CD14-positive monocyte (primary cell): ENCODE measurements at regions of chr1 and their contacts with region 1.

Region 1: GRCh38 chr1:151165738-151166505 is at the starts of genes LYSMD1 and SCNM1:
- DNase-seq: peak; percentile 96 to 99 (median 98)
- H3K4me3 ChIP-seq: peak within 1 kb of the TSS; percentile 71 to 91 (median 81)
- H3K4me3 Mint-ChIP-seq: peak within 1 kb of the TSS; percentile 95 to 97
- H3K27ac ChIP-seq: peak within 1 kb of the TSS; percentile 56 to 83
- H3K27ac Mint-ChIP-seq: peak within 1 kb of the TSS; percentile 89 to 95 (median 93)
- H3K4me1 ChIP-seq: peaks cover 27 to 31% of the 10 kb centered on the region in 2 donors
- H3K4me1 Mint-ChIP-seq: peaks cover 44% of the 10 kb centered on the region
- H3K27me3 ChIP-seq: no peaks in the 10 kb centered on the region
- H3K27me3 Mint-ChIP-seq: peaks cover 0 to 1% (median 0%) of the 10 kb centered on the region in 3 donors
- CTCF ChIP-seq: no peak
- polyA plus RNA-seq, gene LYSMD1: 0.16 to 0.24 TPM in 2 of 3 donors, not detected in the other
- polyA plus RNA-seq, gene SCNM1: 74.9 to 110 (median 103) TPM

Region 2: DNA sequence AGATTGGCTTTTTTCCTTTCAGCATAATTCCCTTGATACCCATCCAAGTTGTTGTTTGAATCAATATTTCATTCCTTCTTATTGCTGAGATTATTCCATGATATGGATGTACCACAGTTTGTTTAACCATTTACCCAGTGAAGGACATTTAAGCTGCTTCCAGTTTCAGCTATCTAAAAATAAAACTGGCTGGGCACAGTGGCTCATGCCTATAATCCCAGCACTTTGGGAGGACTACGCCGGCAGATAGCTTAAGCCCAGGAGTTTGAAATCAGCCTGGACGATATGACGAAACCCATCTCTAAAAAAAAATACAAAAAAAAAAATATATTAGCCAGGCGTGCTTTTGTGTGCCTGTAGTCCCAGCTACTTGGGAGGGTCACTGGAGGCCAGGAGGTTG is 52.0 kb before region 1 on chr1:
- intact Hi-C with region 1: no loop called
- DNase-seq: no peak
- H3K4me3 ChIP-seq: no peak overlapping the region
- H3K4me3 Mint-ChIP-seq: no peak overlapping the region
- H3K27ac ChIP-seq: no peak overlapping the region
- H3K27ac Mint-ChIP-seq: no peak overlapping the region
- H3K4me1 ChIP-seq: no peaks in the 10 kb centered on the region
- H3K4me1 Mint-ChIP-seq: no peaks in the 10 kb centered on the region
- H3K27me3 ChIP-seq: no peaks in the 10 kb centered on the region
- H3K27me3 Mint-ChIP-seq: peaks cover 0 to 2% (median 0%) of the 10 kb centered on the region in 3 donors
- CTCF ChIP-seq: no peak

Region 3: GRCh38 chr1:151198255-151199127 is 32.6 kb after region 1 on chr1 and contains the start of gene PIP5K1A:
- intact Hi-C with region 1: loop called in 1 of 2 experiments (anchors 2 kb)
- DNase-seq: peak; percentile 98 to 100 (median 99)
- H3K4me3 ChIP-seq: peak within 1 kb of the TSS; percentile 54 to 90 (median 67)
- H3K4me3 Mint-ChIP-seq: peak within 1 kb of the TSS; percentile 97 to 99
- H3K27ac ChIP-seq: peak within 1 kb of the TSS; percentile 89 to 90
- H3K27ac Mint-ChIP-seq: peak within 1 kb of the TSS; percentile 98 to 99 (median 99)
- H3K4me1 ChIP-seq: peaks cover 25 to 37% of the 10 kb centered on the region in 2 donors
- H3K4me1 Mint-ChIP-seq: peaks cover 42% of the 10 kb centered on the region
- H3K27me3 ChIP-seq: peaks cover 0 to 2% of the 10 kb centered on the region in 2 donors
- H3K27me3 Mint-ChIP-seq: peaks cover 4 to 8% (median 4%) of the 10 kb centered on the region in 3 donors
- CTCF ChIP-seq: no peak
- polyA plus RNA-seq, gene PIP5K1A: 10.8 to 47.7 (median 11.7) TPM

Region 4: GRCh38 chr1:151611832-151612500 is 446.0 kb after region 1 on chr1 and contains the start of gene SNX27:
- intact Hi-C with region 1: loop called in 1 of 2 experiments (anchors 5 kb)
- DNase-seq: peak; percentile 91 to 92 (median 92)
- H3K4me3 ChIP-seq: peak within 1 kb of the TSS; percentile 64 to 90 (median 89)
- H3K4me3 Mint-ChIP-seq: peak within 1 kb of the TSS; percentile 94 to 97
- H3K27ac ChIP-seq: peak within 1 kb of the TSS; percentile 95
- H3K27ac Mint-ChIP-seq: peak within 1 kb of the TSS; percentile 97 to 100 (median 99)
- H3K4me1 ChIP-seq: peaks cover 52 to 67% of the 10 kb centered on the region in 2 donors
- H3K4me1 Mint-ChIP-seq: peaks cover 61% of the 10 kb centered on the region
- H3K27me3 ChIP-seq: no peaks in the 10 kb centered on the region
- H3K27me3 Mint-ChIP-seq: peaks cover 0 to 3% (median 0%) of the 10 kb centered on the region in 3 donors
- CTCF ChIP-seq: no peak
- polyA plus RNA-seq, gene SNX27: 40.1 to 57.1 (median 47.6) TPM